ENCODE measurements at regions of chr11 and their contacts with region 1.

Region 1: DNA sequence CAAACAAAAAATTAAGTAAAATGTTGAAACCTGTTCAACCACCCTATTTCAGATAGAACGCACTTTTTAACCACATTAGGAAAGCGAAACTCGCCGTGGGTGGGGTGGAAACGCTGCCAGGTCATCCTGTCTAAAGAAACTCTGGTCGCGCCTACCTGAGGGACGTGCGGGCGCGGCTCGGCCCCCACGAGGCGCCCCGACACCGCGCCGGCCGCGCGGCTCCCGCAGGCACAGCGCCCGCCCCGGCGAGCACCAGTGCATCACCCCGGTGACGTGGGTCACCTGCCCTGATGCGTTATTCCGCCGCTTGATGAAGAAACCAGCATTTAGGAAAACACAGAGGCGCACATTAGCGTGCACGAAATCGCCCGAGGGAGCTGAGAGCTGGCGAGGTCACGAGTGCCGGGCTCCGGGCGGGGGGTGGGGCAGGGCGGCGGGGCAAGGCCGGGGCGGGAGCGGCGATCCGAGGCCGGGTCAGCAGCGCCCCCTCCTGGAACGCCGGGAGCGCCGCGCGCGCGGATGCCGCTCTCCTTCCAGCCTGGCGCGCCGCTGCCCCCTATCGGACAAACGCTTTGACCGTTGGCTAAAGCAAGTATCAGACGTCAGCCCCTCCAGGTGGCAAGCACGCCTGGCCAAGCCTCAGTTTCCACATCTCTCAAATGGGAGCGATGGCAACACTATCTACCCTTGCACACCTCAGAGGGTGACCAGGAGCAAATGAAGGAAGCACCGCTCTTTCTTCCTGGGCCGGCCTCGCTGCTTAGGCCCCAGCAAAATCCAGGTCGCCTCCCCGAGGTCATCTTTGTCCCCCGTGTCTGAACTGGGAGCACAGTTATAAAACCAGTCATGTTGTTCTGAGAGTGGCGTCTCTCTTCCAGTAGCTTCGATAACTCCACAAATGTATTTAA is 15.7 kb upstream of the SNX32 start:
- DNase-seq: peak; percentile 94 to 97 (median 96)
- ATAC-seq: peak; percentile 96
- H3K4me3 ChIP-seq: peak overlapping the region; percentile 49
- H3K27ac ChIP-seq: peak overlapping the region; percentile 34; the same call in 1 of the 3 replicates
- H3K4me1 ChIP-seq: peaks cover 0 to 17% of the 10 kb centered on the region in 2 experiments; a peak in 2 of 5 replicates
- H3K27me3 ChIP-seq: peaks cover 3 to 4% of the 10 kb centered on the region in 2 experiments; a peak in 1 of 5 replicates
- CTCF ChIP-seq: peak; percentile 95 to 99 (median 99)
- EP300 ChIP-seq: no peak
- POLR2A ChIP-seq: no peak
- RAD21 ChIP-seq: peak; percentile 94 to 95

Region 2: GRCh38 chr11:65540297-65541092 is 277.6 kb before region 1 on chr11:
- CTCF ChIA-PET with region 1: interaction called, 6 read pairs
- POLR2A ChIA-PET with region 1: no interaction called
- in situ Hi-C with region 1: no loop called
- intact Hi-C with region 1: loop called (anchors 10 kb)
- DNase-seq: peak; percentile 92 to 97 (median 94)
- ATAC-seq: peak; percentile 97
- H3K4me3 ChIP-seq: peak overlapping the region; percentile 76
- H3K27ac ChIP-seq: peak overlapping the region; percentile 78
- H3K4me1 ChIP-seq: peaks cover 9 to 48% of the 10 kb centered on the region in 2 experiments
- H3K27me3 ChIP-seq: no peaks in the 10 kb centered on the region
- CTCF ChIP-seq: peak; percentile 88 to 94 (median 92)
- EP300 ChIP-seq: no peak
- POLR2A ChIP-seq: peak; percentile 69
- RAD21 ChIP-seq: peak; percentile 92 to 96

Region 3: GRCh38 chr11:65637794-65638317 is 180.2 kb before region 1 on chr11 and contains the start of gene SIPA1:
- CTCF ChIA-PET with region 1: no interaction called
- POLR2A ChIA-PET with region 1: no interaction called
- in situ Hi-C with region 1: no loop called
- intact Hi-C with region 1: loop called (anchors 2 kb)
- DNase-seq: peak; percentile 84 to 93 (median 87)
- ATAC-seq: peak; percentile 87
- H3K4me3 ChIP-seq: peak within 1 kb of the TSS; percentile 85
- H3K27ac ChIP-seq: peak within 1 kb of the TSS; percentile 93
- H3K4me1 ChIP-seq: peaks cover 32 to 95% of the 10 kb centered on the region in 2 experiments
- H3K27me3 ChIP-seq: no peaks in the 10 kb centered on the region
- CTCF ChIP-seq: peak; percentile 69 to 74 (median 71)
- EP300 ChIP-seq: 0 out of 2 replicates have a peak, but pooled peaks have one; percentile 5
- POLR2A ChIP-seq: peak; percentile 84; the same call in 1 of the 2 replicates
- RAD21 ChIP-seq: peak; percentile 19 to 67
- polyA plus RNA-seq, gene SIPA1: 0.25 to 1.4 TPM

Region 4: DNA sequence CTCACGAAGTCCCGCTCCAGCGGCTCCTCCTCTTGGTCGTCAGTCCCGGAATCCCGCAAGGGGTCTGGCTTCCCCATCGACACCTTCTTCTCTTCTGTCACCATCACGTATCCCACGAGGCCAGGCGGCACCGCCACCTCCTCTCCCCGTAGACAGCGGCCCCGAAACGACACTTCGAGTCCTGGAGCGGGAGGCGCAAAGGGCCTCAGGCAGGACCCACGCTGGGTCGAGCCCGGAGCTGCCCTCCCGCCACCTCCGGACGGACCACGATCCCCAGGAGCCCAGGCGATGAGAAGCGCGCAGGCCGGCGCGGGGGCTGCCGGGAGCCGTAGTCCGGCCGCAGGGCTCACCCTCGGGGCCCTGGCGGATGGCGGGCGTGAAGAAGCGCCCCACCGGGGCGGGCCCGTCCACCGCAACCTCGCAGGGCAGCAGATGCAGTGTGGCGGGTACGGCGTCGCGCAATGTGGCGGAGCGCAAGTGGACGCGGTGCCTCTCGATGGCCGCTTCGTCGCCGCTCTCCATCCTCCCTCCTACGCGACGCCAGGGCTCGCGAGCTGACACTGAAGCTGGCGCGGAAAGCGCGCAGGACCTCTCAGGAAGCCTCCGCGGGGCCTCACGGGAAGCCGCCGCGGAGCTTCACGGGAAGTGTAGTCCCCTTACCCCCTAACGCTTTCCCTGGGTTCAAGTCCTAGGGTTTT is 97.7 kb before region 1 on chr11 and contains the start of gene RNASEH2C:
- CTCF ChIA-PET with region 1: interaction called, 3 read pairs
- POLR2A ChIA-PET with region 1: interaction called, 12 read pairs
- in situ Hi-C with region 1: no loop called
- intact Hi-C with region 1: no loop called
- DNase-seq: peak; percentile 86 to 95 (median 88)
- ATAC-seq: peak; percentile 94
- H3K4me3 ChIP-seq: peak within 1 kb of the TSS; percentile 64
- H3K27ac ChIP-seq: peak within 1 kb of the TSS; percentile 65
- H3K4me1 ChIP-seq: peaks cover 12 to 22% of the 10 kb centered on the region in 2 experiments; a peak in 4 of 5 replicates
- H3K27me3 ChIP-seq: no peaks in the 10 kb centered on the region
- CTCF ChIP-seq: no peak
- EP300 ChIP-seq: no peak
- POLR2A ChIP-seq: peak; percentile 88
- RAD21 ChIP-seq: no peak
- polyA plus RNA-seq, gene RNASEH2C: 5.4 to 9.4 TPM

Region 5: DNA sequence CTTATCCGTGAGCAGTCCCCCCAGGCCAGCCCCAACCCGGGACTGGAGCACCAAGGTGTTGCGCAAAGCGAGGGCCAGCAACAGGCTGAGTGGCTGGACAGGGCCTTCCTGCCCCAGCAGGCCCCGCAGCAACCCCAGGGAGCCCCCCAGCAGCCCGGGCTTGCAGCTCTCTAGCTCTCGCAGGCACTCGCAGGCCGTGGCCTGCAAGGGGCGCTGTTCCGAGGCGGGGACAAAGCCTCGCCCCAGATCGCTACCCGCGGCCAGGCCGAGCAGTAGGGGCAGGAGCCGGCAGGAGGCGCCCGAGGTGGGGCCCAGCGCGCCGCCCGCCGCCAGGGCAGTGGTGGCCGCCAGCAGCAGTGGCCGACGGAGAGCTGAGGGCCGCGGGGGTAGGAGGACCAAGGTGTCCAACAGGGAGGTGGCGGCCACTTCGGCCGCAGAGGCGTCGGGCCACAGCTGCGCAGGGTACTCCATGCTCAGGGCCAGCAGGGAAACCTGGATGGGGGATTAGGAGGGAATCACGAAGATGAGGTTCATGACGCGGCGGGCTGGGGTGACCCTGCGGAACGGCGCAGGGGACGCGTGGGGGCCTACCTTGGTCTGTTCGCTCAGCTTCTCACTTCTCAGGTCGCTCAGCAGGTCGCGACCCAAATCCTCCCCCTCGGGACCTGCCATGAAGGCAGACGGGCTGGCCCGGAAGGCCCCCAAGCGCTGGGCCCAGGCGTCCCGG is 38.1 kb before region 1 on chr11:
- CTCF ChIA-PET with region 1: interaction called, 31 read pairs
- POLR2A ChIA-PET with region 1: interaction called, 10 read pairs
- in situ Hi-C with region 1: no loop called
- intact Hi-C with region 1: loop called (anchors 5 kb)
- DNase-seq: peak; percentile 84 to 92 (median 87)
- ATAC-seq: peak; percentile 92
- H3K4me3 ChIP-seq: peak overlapping the region; percentile 86
- H3K27ac ChIP-seq: peak overlapping the region; percentile 95
- H3K4me1 ChIP-seq: peaks cover 7 to 48% of the 10 kb centered on the region in 2 experiments; a peak in 4 of 5 replicates
- H3K27me3 ChIP-seq: no peaks in the 10 kb centered on the region
- CTCF ChIP-seq: peak; percentile 96 to 100 (median 99)
- EP300 ChIP-seq: no peak
- POLR2A ChIP-seq: peak; percentile 85
- RAD21 ChIP-seq: peak; percentile 86 to 90